ENCODE measurements at regions of chr5 and their contacts with region 1.

Region 1: DNA sequence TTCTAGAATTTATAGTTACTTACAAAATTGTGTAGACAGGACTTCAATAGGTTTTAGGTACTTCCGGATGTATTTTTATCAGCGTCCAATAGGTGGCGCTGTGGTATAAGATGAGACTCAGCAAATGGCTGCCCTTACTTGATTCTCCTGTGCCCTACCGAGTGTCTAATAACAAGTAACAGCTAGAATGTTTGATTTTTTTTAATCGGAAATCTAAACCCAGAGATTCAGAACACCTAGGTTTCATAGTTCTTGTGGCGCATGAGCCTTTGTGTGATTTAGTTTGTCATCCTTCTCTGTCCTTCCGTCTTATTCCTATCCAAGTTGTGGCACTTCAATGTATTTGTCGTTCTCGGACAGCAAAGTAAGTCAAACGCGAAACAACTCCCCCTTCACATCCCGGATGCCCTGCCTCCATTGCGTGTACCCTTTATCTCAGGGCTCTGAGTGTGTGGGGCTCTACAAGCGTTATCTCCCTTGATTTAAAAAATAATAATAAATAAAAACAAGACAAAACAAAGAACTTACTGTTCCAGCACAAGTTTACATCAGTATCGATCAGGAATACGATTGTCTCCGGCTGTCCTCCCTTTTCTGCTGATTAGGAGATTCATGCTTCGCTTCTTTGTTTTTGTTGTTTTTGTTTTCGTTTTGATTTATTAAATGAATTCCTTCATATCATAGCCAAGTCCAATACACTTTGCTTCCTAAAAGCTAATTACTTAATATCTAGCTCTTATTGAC is 50.7 kb upstream of the SLC30A5 start:
- DNase-seq: peak; percentile 18 to 87
- ATAC-seq: peak; percentile 88 to 98 (median 95)
- H3K4me3 ChIP-seq: peak overlapping the region; percentile 1 to 64 (median 52)
- H3K27ac ChIP-seq: peak overlapping the region; percentile 7 to 85 (median 78)
- H3K4me1 ChIP-seq: peaks cover 0 to 6% (median 0%) of the 10 kb centered on the region in 9 donors
- H3K27me3 ChIP-seq: no peaks in the 10 kb centered on the region
- CTCF ChIP-seq: peak; percentile 81 to 91 (median 87)

Region 2: GRCh38 chr5:68924490-68925145 is 118.5 kb before region 1 on chr5:
- intact Hi-C with region 1: no loop called
- DNase-seq: no peak
- ATAC-seq: peak; percentile 51 to 91 (median 68)
- H3K4me3 ChIP-seq: no peak overlapping the region
- H3K27ac ChIP-seq: no peak overlapping the region
- H3K4me1 ChIP-seq: peaks cover 0 to 4% (median 0%) of the 10 kb centered on the region in 9 donors
- H3K27me3 ChIP-seq: no peaks in the 10 kb centered on the region
- CTCF ChIP-seq: no peak

Region 3: DNA sequence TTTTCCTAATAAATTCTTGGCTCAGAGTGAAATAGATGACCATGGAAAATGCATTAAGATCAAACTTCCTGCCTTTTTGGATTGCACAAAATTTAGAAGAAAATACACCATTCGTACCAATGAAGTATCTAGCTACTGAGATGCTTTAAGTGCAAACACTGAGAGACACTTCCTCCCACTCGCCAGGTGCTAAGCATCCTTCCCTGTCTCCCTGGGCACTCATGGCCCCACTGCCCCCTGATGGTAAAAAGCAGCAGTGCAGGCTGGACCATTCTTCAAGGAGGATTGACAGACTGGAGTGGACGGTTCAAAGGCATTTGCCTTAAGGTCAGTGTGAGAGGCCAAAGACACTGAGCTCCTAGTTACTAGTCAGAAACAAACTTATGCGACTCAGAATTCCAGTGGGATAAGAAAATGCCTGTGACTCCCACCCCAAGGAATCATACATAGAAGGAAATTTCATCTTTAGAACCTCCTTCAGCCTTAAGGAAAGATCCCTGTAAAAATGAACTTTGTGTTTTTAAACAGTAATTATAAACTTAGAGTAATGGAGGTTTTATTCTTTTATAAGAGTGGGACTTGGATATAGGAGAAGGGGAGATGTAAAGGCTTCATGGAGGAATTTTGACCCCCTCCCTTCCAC is 35.2 kb before region 1 on chr5:
- intact Hi-C with region 1: no loop called
- DNase-seq: peak; percentile 53 to 58
- ATAC-seq: peak in 7 of 8 donors; percentile 33 to 74 (median 73)
- H3K4me3 ChIP-seq: no peak overlapping the region
- H3K27ac ChIP-seq: no peak overlapping the region
- H3K4me1 ChIP-seq: no peaks in the 10 kb centered on the region
- H3K27me3 ChIP-seq: peaks cover 0 to 4% (median 0%) of the 10 kb centered on the region in 7 donors
- CTCF ChIP-seq: peak; percentile 37 to 88 (median 80)

Region 4: GRCh38 chr5:69093771-69094482 is 50.8 kb after region 1 on chr5 and contains the start of gene SLC30A5:
- intact Hi-C with region 1: loop called in 6 of 10 experiments (anchors 2 to 10 kb)
- DNase-seq: peak; percentile 99
- ATAC-seq: peak; percentile 100
- H3K4me3 ChIP-seq: peak within 1 kb of the TSS; percentile 68 to 100 (median 83)
- H3K27ac ChIP-seq: peak within 1 kb of the TSS; percentile 86 to 99 (median 96)
- H3K4me1 ChIP-seq: peaks cover 4 to 38% (median 22%) of the 10 kb centered on the region in 9 donors
- H3K27me3 ChIP-seq: no peaks in the 10 kb centered on the region
- CTCF ChIP-seq: peak; percentile 86 to 99 (median 93)
- total RNA-seq, gene SLC30A5: 25.7 to 36.7 (median 32.1) TPM

Region 5: DNA sequence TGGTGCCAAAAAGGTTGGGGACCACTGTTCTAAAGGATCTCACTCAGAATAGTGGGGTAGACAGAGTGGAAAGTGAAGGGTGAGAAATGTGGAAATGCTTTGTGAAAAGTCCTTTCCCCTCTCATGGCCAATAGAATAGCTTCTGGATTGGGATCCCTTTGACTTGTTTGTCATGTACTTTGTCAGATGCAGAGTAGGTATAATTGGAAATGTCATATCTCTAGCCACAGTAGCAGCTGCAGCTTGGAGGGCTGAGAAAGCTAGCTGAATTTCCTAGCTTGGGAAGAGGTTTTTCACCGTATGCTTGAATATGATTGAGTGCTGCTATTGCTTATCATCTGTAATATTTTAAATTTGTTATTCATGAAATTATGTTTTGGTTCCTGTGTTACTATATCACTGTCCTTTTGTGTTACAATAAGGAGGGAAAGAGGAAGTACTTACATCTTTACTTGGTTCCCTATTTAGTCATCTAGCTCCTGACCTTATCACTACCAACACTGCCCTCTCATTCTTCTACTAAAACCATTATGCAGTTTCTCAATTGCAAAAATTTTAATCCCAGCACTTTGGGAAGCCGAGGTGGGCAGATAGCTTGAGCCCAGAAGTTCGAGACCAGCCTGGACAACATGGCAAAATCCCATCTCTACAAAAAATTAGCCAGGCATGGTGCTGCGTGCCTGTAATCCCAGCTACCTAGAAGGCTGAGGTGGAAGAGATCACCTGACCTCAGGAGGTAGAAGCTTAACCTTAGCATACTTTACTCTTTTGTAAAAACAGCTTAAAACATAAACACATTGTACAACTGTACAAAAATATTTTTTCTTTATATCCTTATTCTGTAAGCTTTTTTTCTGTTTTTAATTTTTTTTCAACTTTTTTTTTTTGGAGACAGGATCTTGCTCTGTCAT is 63.2 kb after region 1 on chr5:
- intact Hi-C with region 1: loop called in 1 of 10 experiments (anchors 10 kb)
- DNase-seq: no peak
- ATAC-seq: no peak
- H3K4me3 ChIP-seq: no peak overlapping the region
- H3K27ac ChIP-seq: no peak overlapping the region
- H3K4me1 ChIP-seq: peaks cover 0 to 9% (median 0%) of the 10 kb centered on the region in 9 donors
- H3K27me3 ChIP-seq: no peaks in the 10 kb centered on the region
- CTCF ChIP-seq: no peak

Region 6: GRCh38 chr5:69189162-69190086 is 146.3 kb after region 1 on chr5 and contains the start of gene CENPH:
- intact Hi-C with region 1: loop called in 1 of 10 experiments (anchors 10 kb)
- DNase-seq: peak; percentile 87 to 91
- ATAC-seq: peak; percentile 97 to 100 (median 98)
- H3K4me3 ChIP-seq: peak within 1 kb of the TSS; percentile 49 to 93 (median 78)
- H3K27ac ChIP-seq: peak within 1 kb of the TSS in 9 of 10 donors; percentile 35 to 82 (median 76)
- H3K4me1 ChIP-seq: peaks cover 3 to 18% (median 17%) of the 10 kb centered on the region in 9 donors
- H3K27me3 ChIP-seq: no peaks in the 10 kb centered on the region
- CTCF ChIP-seq: no peak
- total RNA-seq, gene CENPH: 2.4 to 5.1 (median 3.4) TPM

Region 7: GRCh38 chr5:69369369-69370121 is 326.5 kb after region 1 on chr5 and contains the starts of genes AK6, RAD17 and TAF9:
- intact Hi-C with region 1: loop called in 1 of 10 experiments (anchors 2 kb)
- DNase-seq: peak; percentile 92 to 94
- ATAC-seq: peak; percentile 98 to 99 (median 98)
- H3K4me3 ChIP-seq: peak within 1 kb of the TSS; percentile 52 to 87 (median 78)
- H3K27ac ChIP-seq: peak within 1 kb of the TSS; percentile 95 to 100 (median 99)
- H3K4me1 ChIP-seq: peaks cover 0 to 50% (median 31%) of the 10 kb centered on the region in 9 donors
- H3K27me3 ChIP-seq: no peaks in the 10 kb centered on the region
- CTCF ChIP-seq: peak in 1 of 9 donors; percentile 1
- total RNA-seq, gene AK6: 20.8 to 53.2 (median 28.7) TPM
- total RNA-seq, gene RAD17: 17.5 to 23.5 (median 19.9) TPM
- total RNA-seq, gene TAF9: 36.8 to 51.5 (median 44.5) TPM